AG04449 (cell line): ENCODE measurements at regions of chr19 and their contacts with region 1.

Region 1: DNA sequence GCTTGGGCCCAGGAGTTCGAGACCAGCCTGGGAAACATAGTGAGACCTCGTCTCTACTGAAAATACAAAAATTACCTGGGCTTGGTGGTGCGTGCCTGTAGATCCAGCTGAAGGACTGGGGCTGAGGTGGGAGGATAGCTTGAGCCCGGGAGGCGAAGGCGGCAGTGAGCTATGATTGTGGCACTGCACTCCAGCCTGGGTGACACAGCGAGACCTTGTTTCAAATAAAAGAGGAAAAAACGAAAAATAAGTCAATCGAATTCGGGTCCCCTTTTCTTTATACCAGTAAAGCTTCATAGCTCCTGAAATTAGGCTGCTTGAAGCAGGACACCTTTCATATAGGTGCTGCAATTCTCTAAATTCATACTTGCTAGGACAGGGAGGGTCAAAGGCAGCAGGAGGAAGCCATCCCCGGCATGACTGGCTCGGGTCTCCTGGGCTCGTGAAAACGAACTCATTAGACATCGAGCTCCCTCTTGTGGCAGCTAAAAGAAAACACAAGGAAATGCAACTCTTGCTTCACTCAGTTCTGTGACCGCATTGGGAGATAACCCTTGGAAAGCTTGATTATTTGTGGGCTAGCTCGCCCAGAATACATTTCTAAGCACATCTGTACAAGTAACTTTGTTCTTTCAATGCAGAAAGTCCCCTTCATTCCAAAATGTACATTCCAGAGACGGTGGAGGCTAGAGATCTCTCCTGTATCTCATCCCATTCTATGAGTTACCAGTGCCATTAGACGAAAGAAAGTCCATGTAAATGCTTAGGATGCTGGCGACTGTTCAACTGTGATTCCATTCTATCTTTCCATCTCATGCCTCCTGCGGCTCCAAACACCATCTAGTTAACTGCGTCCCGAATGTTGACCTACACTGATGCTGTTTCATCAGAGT is 16.8 kb downstream of the FPR2 start:
- DNase-seq: peak; percentile 14
- H3K4me3 ChIP-seq: no peak overlapping the region
- CTCF ChIP-seq: peak; percentile 65

Region 2: DNA sequence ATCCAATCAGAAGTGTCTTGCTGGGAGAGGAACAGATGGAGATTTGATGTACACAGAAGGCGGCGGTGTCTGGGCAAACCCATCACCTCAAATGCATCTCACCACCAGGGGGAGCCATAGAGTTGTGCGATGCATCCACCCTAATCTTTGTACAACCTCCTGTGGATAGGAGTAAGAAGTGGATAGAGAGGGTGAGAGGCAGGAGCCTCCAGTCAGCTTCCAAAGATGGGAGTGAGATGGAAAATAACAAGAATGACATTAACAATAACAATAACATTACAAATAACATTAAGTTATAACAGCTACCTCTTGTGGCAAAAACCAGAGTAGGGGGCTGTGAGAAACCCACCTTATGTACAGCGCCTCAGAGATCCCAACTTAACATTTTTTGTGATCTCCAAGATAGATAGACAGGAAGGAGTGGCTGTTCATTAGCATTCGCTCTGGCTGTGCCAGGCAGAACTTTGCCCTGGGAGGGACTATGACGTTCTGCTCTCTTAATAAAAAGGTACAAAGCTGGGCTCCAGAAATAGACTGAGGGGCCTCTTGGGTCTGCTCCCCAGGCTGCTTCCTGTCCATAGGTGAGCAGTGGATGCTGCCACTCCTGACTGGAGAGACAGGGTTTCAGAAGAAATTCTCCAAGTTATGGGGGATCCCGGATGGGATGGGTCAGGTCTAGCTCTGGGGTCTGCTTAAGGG is 304.7 kb before region 1 on chr19:
- CTCF ChIA-PET with region 1: interaction called, 35 read pairs
- POLR2A ChIA-PET with region 1: no interaction called
- DNase-seq: no peak
- H3K4me3 ChIP-seq: no peak overlapping the region
- CTCF ChIP-seq: peak; percentile 85

Region 3: GRCh38 chr19:51607920-51608562 is 169.8 kb before region 1 on chr19:
- CTCF ChIA-PET with region 1: interaction called, 19 read pairs
- POLR2A ChIA-PET with region 1: no interaction called
- DNase-seq: no peak
- H3K4me3 ChIP-seq: no peak overlapping the region
- CTCF ChIP-seq: peak; percentile 82

Region 4: DNA sequence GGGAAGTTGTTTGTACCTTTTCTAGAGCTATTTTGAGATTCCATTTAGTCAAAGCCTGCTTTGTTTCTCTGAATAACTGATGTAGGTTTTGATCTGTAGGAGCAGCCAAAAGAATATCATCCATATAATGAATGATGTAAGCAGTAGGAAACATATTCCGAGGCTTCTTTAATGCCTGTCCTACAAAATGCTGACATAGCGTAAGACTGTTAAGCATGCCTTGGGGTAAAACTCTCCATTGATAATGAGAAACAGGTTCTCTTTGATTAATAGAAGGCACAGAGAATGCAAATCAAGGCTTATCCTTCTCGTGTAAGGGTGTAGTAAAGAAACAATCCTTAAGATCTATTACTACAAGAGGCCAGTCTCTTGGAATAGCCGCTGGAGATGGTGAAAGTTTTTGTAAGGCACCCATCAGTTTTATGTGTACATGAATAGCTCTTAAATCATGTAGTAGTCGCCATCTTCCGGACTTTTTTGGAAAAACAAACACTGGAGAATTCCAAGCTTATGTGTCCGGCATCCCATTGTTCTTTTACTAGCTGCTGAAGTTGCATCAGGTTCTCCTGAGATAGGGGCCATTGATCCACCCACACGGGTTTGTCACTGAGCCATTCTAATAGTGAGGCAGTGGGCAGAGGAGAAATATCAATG is 30.6 kb after region 1 on chr19:
- CTCF ChIA-PET with region 1: interaction called, 10 read pairs
- POLR2A ChIA-PET with region 1: no interaction called
- DNase-seq: no peak
- H3K4me3 ChIP-seq: no peak overlapping the region
- CTCF ChIP-seq: no peak

Region 5: DNA sequence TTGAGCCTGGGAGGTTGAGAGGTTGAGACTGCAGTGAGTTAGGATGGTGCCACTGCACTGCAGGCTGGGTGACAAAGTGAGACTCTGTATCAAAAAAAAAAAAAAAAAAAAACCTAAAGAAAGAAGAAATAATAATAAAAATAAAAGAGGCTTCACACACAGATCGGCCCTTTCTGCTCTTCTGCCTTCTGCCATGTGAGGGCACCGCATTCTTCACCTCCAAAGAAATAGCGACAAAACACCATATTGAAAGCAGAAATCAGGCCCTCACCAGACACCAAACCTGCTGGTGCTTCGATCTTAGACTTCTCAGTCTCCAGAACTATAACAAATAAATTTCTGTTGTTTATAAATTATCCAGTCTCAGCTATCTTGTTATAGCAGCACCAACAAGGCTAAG is 124.0 kb after region 1 on chr19:
- CTCF ChIA-PET with region 1: no interaction called
- POLR2A ChIA-PET with region 1: no interaction called
- DNase-seq: no peak
- H3K4me3 ChIP-seq: no peak overlapping the region
- CTCF ChIP-seq: no peak